GM12878 (cell line): ENCODE measurements at regions of chrX and their contacts with region 1.

Region 1: GRCh38 chrX:74814681-74815080 is 110.6 kb downstream of the NEXMIF start:
- DNase-seq: no peak
- ATAC-seq: no peak
- H3K4me3 ChIP-seq: no peak overlapping the region
- H3K27ac ChIP-seq: no peak overlapping the region
- H3K4me1 ChIP-seq: no peaks in the 10 kb centered on the region
- H3K27me3 ChIP-seq: no peaks in the 10 kb centered on the region
- CTCF ChIP-seq: no peak
- EP300 ChIP-seq: no peak
- POLR2A ChIP-seq: no peak
- RAD21 ChIP-seq: no peak

Region 2: DNA sequence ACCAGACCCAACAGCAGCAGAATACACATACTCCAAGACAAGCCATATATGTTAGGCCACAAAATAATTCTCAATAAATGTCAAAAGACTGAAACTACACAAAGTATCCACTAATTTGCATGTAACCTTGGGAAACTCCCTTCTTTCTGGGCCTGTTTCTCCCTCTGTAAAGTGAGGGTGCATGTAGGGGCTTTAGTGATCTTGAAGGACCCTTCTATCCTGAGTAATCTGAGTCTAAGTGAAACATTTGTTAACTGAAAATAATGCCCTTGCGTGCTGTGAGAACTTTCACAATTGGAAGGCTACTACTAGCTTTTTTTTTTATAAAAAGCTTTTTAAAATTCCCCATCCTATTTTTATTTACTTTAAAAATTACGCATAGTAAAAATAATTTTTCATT is 14.6 kb before region 1 on chrX:
- CTCF ChIA-PET with region 1: interaction called, 13 read pairs
- POLR2A ChIA-PET with region 1: interaction called, 3 read pairs
- RAD21 ChIA-PET with region 1: interaction called, 3 read pairs
- SMC1A ChIA-PET with region 1: interaction called, 4 read pairs
- in situ Hi-C with region 1: no loop called
- intact Hi-C with region 1: no loop called
- DNase-seq: no peak
- ATAC-seq: peak; percentile 83
- H3K4me3 ChIP-seq: no peak overlapping the region
- H3K27ac ChIP-seq: peak overlapping the region; percentile 18; the same call in 1 of the 2 replicates
- H3K4me1 ChIP-seq: no peaks in the 10 kb centered on the region
- H3K27me3 ChIP-seq: no peaks in the 10 kb centered on the region
- CTCF ChIP-seq: no peak
- EP300 ChIP-seq: no peak
- POLR2A ChIP-seq: no peak
- RAD21 ChIP-seq: peak; percentile 15; the same call in 1 of the 2 replicates

Region 3: GRCh38 chrX:74931214-74931613 is 116.5 kb after region 1 on chrX:
- CTCF ChIA-PET with region 1: no interaction called
- POLR2A ChIA-PET with region 1: no interaction called
- RAD21 ChIA-PET with region 1: no interaction called
- SMC1A ChIA-PET with region 1: no interaction called
- in situ Hi-C with region 1: no loop called
- intact Hi-C with region 1: no loop called
- DNase-seq: no peak
- ATAC-seq: peak; percentile 60
- H3K4me3 ChIP-seq: no peak overlapping the region
- H3K27ac ChIP-seq: no peak overlapping the region
- H3K4me1 ChIP-seq: no peaks in the 10 kb centered on the region
- H3K27me3 ChIP-seq: no peaks in the 10 kb centered on the region
- CTCF ChIP-seq: no peak
- EP300 ChIP-seq: no peak
- POLR2A ChIP-seq: no peak
- RAD21 ChIP-seq: no peak